ENCODE measurements at regions of chr1 and their contacts with region 1.

Region 1: GRCh38 chr1:183622884-183623785 is 12.4 kb downstream of the ARPC5 start:
- DNase-seq: peak; percentile 63
- H3K4me3 ChIP-seq: peak overlapping the region in 1 of 2 experiments; percentile 28; a peak in 1 of 4 replicates
- H3K27ac ChIP-seq: peak overlapping the region in 1 of 2 experiments; percentile 47; a peak in 1 of 4 replicates
- H3K4me1 ChIP-seq: peaks cover 3 to 20% of the 10 kb centered on the region in 2 experiments; a peak in 2 of 4 replicates
- H3K27me3 ChIP-seq: no peaks in the 10 kb centered on the region
- CTCF ChIP-seq: peak; percentile 80
- EP300 ChIP-seq: no peak
- RAD21 ChIP-seq: peak; percentile 90

Region 2: DNA sequence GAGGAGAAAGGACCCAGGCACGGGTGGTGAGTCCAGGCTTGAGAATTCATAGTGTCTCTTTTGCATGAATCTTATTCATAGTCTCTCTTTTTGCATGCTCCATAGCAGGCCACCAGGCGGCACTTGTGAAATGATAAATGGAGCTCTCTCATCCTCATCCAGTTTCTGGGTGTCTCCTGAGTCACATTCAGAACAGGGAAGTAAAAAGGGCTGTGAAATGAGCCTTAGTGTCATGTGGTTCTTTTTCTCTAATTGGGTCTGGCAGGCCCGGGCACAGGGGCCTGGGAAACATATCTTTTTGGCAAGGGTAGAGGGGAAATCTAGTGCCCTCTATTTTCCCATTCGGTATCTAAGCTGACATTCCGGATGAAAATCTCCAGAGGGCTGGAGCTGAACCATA is 13.8 kb before region 1 on chr1:
- CTCF ChIA-PET with region 1: interaction called, 13 read pairs
- POLR2A ChIA-PET with region 1: no interaction called
- DNase-seq: peak; percentile 49
- H3K4me3 ChIP-seq: peak overlapping the region; percentile 23 to 40; a peak in 3 of 4 replicates
- H3K27ac ChIP-seq: peak overlapping the region; percentile 94 to 98
- H3K4me1 ChIP-seq: peaks cover 15 to 20% of the 10 kb centered on the region in 2 experiments
- H3K27me3 ChIP-seq: no peaks in the 10 kb centered on the region
- CTCF ChIP-seq: peak; percentile 80
- EP300 ChIP-seq: peak; percentile 51 to 61; a peak in 3 of 4 replicates
- RAD21 ChIP-seq: peak; percentile 71

Region 3: GRCh38 chr1:183635606-183636333 is 12.6 kb after region 1 on chr1 and contains the start of gene ARPC5:
- CTCF ChIA-PET with region 1: interaction called, 13 read pairs
- POLR2A ChIA-PET with region 1: no interaction called
- DNase-seq: peak; percentile 93
- H3K4me3 ChIP-seq: peak within 1 kb of the TSS; percentile 85 to 92
- H3K27ac ChIP-seq: peak within 1 kb of the TSS; percentile 82 to 94
- H3K4me1 ChIP-seq: peaks cover 10 to 32% of the 10 kb centered on the region in 2 experiments; a peak in 3 of 4 replicates
- H3K27me3 ChIP-seq: no peaks in the 10 kb centered on the region
- CTCF ChIP-seq: no peak
- EP300 ChIP-seq: no peak
- RAD21 ChIP-seq: no peak
- polyA plus RNA-seq, gene ARPC5: 66.8 and 97.6 TPM in 2 replicates